ENCODE measurements at regions of chr9 and their contacts with region 1.

Region 1: DNA sequence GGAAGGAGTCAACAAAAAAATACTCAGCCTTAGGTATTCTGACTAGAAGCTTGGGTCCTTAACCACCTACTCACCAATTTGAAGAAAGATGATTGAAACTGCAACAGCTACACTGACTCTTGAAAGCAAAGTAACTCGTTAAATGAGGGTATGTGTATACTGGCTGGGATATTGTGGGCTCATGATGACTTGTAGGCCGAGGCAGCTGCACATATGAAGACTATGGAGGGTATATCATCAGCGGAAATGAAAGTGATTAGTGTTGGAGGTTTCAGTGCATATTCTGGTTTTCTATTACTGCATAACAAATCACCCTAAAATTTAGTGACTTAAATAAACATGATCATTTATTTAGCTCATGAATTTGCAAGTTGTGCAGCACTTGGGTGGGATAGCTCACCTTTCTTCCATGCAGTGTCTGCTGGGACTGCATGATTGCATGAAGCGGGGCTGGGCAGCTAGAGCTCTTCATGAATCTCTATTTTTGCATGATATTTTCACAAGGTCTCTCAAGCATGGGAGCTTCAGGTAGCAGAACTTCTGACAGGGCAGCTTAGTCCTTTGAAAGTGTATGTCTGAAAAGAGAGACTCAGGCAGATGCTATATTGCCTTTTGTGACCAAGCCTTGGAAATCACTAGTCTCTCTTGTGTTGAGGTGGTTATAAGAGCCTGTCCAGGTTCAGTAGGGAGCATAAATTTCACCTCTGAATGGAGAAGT is 96.1 kb upstream of the CDKN2B start:
- DNase-seq: peak; percentile 19
- H3K4me3 Mint-ChIP-seq: no peak overlapping the region
- H3K27ac Mint-ChIP-seq: peak overlapping the region; percentile 11
- H3K4me1 Mint-ChIP-seq: peaks cover 57% of the 10 kb centered on the region
- H3K27me3 Mint-ChIP-seq: peaks cover 39% of the 10 kb centered on the region

Region 2: GRCh38 chr9:21812946-21813568 is 292.1 kb before region 1 on chr9:
- intact Hi-C with region 1: loop called (anchors 5 kb)
- DNase-seq: peak; percentile 49
- H3K4me3 Mint-ChIP-seq: no peak overlapping the region
- H3K27ac Mint-ChIP-seq: no peak overlapping the region
- H3K4me1 Mint-ChIP-seq: peaks cover 39% of the 10 kb centered on the region
- H3K27me3 Mint-ChIP-seq: no peaks in the 10 kb centered on the region

Region 3: DNA sequence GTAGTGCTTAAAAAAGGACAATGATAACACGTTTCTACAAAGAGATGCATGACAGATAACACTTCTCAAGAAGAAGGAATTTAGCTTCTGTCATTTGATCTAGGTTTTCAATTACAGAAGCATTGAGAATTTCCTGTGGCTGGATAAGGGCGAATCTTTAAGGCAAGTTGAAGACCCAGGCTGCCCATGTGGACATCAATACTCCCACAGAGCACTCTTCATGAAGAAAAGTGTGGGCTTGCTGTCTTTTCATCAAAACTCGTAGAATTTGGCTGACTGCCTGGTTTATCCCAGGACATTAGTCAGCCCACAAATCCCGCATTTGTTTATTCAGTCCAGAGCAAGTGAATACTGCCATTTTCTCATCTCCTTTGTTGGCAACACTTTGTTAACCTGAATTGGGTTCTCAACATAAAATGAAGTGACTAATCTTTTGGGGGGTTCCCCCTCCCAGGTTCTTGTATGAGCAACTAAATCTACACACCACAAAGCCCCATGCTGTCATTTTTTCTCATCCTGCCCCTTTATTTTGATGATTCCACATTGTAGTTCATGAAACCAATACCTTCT is 52.7 kb before region 1 on chr9:
- intact Hi-C with region 1: loop called (anchors 1 kb)
- DNase-seq: no peak
- H3K4me3 Mint-ChIP-seq: no peak overlapping the region
- H3K27ac Mint-ChIP-seq: peak overlapping the region; percentile 20
- H3K4me1 Mint-ChIP-seq: peaks cover 39% of the 10 kb centered on the region
- H3K27me3 Mint-ChIP-seq: peaks cover 22% of the 10 kb centered on the region

Region 4: DNA sequence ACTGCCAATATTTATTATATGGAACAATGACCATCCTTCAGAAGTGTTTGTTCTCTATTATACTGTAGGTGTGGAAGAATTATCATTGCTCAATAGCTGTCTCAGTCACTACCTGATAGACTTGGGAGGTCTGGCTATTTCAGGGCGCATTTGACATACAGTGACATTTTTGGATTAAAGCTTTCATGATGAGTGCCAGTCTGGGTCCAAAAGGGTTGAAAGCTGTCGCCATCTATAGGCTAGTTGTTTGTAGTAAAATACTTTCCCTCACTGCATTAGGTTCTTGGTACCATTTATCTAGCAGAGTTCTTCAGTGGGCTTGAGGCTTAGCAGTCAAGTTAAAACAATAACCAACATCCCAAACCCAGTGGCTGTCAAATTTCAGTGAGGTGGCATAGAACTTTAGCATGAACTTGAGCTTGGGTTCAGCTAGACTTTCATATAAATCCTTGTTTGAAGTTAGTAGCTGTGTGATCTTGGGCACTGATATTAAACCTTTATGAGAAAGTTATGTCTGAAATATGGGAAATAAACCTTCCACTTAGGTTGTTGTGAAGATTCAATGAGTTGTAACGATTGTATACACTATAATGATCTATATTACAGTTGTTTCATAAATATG is 14.5 kb after region 1 on chr9:
- intact Hi-C with region 1: loop called (anchors 1 kb)
- DNase-seq: no peak
- H3K4me3 Mint-ChIP-seq: no peak overlapping the region
- H3K27ac Mint-ChIP-seq: no peak overlapping the region
- H3K4me1 Mint-ChIP-seq: peaks cover 16% of the 10 kb centered on the region
- H3K27me3 Mint-ChIP-seq: peaks cover 68% of the 10 kb centered on the region

Region 5: GRCh38 chr9:22211593-22212360 is 106.6 kb after region 1 on chr9:
- intact Hi-C with region 1: loop called (anchors 2 kb)
- DNase-seq: no peak
- H3K4me3 Mint-ChIP-seq: no peak overlapping the region
- H3K27ac Mint-ChIP-seq: no peak overlapping the region
- H3K4me1 Mint-ChIP-seq: peaks cover 48% of the 10 kb centered on the region
- H3K27me3 Mint-ChIP-seq: peaks cover 22% of the 10 kb centered on the region

Measured in activated T-helper 2 cell treated with anti-CD3 and anti-CD28 coated beads, Interferon-gamma antibody, Interleukin-2, Interleukin-4, amounts not matched to agents 10 μg/mL and 5 μg/mL and 100 μg/mL, durations not matched to agents 14 hours and 24 hours and 36 hours (primary cell).